ENCODE measurements at regions of chr4 and their contacts with region 1.

Region 1: GRCh38 chr4:68271851-68272756 is 26.6 kb upstream of the TMPRSS11B start:
- DNase-seq: peak; percentile 11
- ATAC-seq: peak; percentile 83
- H3K4me3 Mint-ChIP-seq: peak overlapping the region; percentile 23
- H3K27ac Mint-ChIP-seq: no peak overlapping the region
- H3K4me1 Mint-ChIP-seq: peaks cover 10% of the 10 kb centered on the region
- H3K27me3 Mint-ChIP-seq: peaks cover 23% of the 10 kb centered on the region
- CTCF ChIP-seq: peak; percentile 80

Region 2: DNA sequence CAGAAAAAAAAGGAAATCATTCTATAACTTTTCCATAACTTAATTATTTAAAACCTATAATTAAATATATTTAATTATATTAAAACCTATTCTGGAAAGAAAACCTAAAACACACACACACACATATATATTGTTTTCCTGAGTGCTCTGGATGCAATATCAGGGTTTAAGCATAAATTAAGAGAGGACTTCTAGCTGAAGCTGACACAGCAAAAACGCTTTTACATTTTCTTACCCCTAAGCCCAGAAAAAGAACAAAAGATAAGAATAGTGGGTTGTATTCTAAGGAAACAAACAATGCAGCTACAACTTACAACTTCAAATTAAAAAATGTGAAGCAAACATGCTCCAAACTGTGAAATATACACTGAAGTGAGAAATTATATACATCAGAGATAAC is 78.9 kb before region 1 on chr4:
- CTCF ChIA-PET with region 1: no interaction called
- POLR2A ChIA-PET with region 1: no interaction called
- intact Hi-C with region 1: no loop called
- DNase-seq: no peak
- ATAC-seq: no peak
- H3K4me3 Mint-ChIP-seq: no peak overlapping the region
- H3K27ac Mint-ChIP-seq: no peak overlapping the region
- H3K4me1 Mint-ChIP-seq: no peaks in the 10 kb centered on the region
- H3K27me3 Mint-ChIP-seq: peaks cover 6% of the 10 kb centered on the region
- CTCF ChIP-seq: no peak

Region 3: GRCh38 chr4:68256284-68256683 is 15.8 kb before region 1 on chr4:
- CTCF ChIA-PET with region 1: interaction called, 11 read pairs
- POLR2A ChIA-PET with region 1: no interaction called
- intact Hi-C with region 1: no loop called
- DNase-seq: no peak
- ATAC-seq: no peak
- H3K4me3 Mint-ChIP-seq: no peak overlapping the region
- H3K27ac Mint-ChIP-seq: no peak overlapping the region
- H3K4me1 Mint-ChIP-seq: no peaks in the 10 kb centered on the region
- H3K27me3 Mint-ChIP-seq: peaks cover 27% of the 10 kb centered on the region
- CTCF ChIP-seq: no peak

Region 4: GRCh38 chr4:68288393-68288740 is 16.3 kb after region 1 on chr4:
- CTCF ChIA-PET with region 1: interaction called, 13 read pairs
- POLR2A ChIA-PET with region 1: no interaction called
- intact Hi-C with region 1: no loop called
- DNase-seq: no peak
- ATAC-seq: no peak
- H3K4me3 Mint-ChIP-seq: no peak overlapping the region
- H3K27ac Mint-ChIP-seq: no peak overlapping the region
- H3K4me1 Mint-ChIP-seq: no peaks in the 10 kb centered on the region
- H3K27me3 Mint-ChIP-seq: peaks cover 2% of the 10 kb centered on the region
- CTCF ChIP-seq: no peak

Region 5: DNA sequence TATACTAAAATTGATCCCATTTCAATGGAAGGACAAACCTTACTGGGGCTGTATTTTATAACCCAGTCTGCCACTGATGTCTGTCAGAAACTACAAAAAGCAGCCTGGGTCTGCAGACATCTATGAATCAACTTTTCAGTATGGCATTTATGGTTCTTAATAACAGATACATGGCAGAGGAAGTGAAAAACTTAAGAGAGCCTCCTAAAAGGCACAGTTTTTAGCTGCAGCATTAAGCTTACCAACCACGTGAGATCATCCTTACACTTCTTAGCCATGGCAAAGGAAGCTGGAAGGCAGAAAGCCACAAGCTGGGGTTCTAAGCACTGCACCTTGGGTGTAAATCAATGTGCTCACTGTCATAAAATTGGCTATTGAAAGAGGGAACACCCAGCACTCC is 320.6 kb after region 1 on chr4:
- CTCF ChIA-PET with region 1: no interaction called
- POLR2A ChIA-PET with region 1: no interaction called
- intact Hi-C with region 1: no loop called
- DNase-seq: no peak
- ATAC-seq: no peak
- H3K4me3 Mint-ChIP-seq: no peak overlapping the region
- H3K27ac Mint-ChIP-seq: no peak overlapping the region
- H3K4me1 Mint-ChIP-seq: no peaks in the 10 kb centered on the region
- H3K27me3 Mint-ChIP-seq: peaks cover 1% of the 10 kb centered on the region
- CTCF ChIP-seq: no peak

Measured in activated CD8-positive, alpha-beta T cell treated with anti-CD3 and anti-CD28 coated beads for 36 hours (primary cell).